Common myeloid progenitor, CD34-positive (primary cell): ENCODE measurements at regions of chrX and their contacts with region 1.

Region 1: DNA sequence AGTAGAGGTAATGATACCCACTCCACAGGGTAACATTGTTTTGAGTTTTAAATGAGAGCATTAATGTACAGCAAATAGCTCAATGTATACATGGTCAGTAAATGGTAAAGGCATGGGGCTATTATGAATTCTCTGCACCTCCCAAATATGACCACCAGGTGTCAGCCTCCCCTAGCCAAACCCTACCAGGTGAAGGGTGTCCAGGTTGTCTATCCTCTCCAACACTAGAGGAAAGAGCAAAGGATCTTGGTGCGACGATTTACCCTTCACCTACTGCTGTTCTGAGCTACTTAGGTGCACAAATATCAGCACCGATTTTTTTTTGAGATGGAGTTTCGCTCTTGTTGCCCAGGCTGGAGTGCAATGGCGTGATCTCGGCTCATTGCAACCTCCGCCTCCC is 26.5 kb upstream of the XIAP start:
- DNase-seq: peak; percentile 43 to 69 (median 60)
- H3K4me3 ChIP-seq: no peak overlapping the region
- H3K27ac ChIP-seq: no peak overlapping the region
- H3K4me1 ChIP-seq: no peaks in the 10 kb centered on the region
- H3K27me3 ChIP-seq: no peaks in the 10 kb centered on the region

Region 2: GRCh38 chrX:123846598-123847455 is 13.4 kb after region 1 on chrX:
- CTCF ChIA-PET with region 1: no interaction called
- POLR2A ChIA-PET with region 1: no interaction called
- DNase-seq: no peak
- H3K4me3 ChIP-seq: no peak overlapping the region
- H3K27ac ChIP-seq: no peak overlapping the region
- H3K4me1 ChIP-seq: peaks cover 0 to 3% (median 0%) of the 10 kb centered on the region in 4 experiments
- H3K27me3 ChIP-seq: no peaks in the 10 kb centered on the region

Region 3: GRCh38 chrX:123884809-123885408 is 51.5 kb after region 1 on chrX:
- CTCF ChIA-PET with region 1: interaction called, 12 read pairs
- POLR2A ChIA-PET with region 1: no interaction called
- DNase-seq: peak; percentile 56 to 77 (median 70)
- H3K4me3 ChIP-seq: no peak overlapping the region
- H3K27ac ChIP-seq: no peak overlapping the region
- H3K4me1 ChIP-seq: no peaks in the 10 kb centered on the region
- H3K27me3 ChIP-seq: no peaks in the 10 kb centered on the region

Region 4: DNA sequence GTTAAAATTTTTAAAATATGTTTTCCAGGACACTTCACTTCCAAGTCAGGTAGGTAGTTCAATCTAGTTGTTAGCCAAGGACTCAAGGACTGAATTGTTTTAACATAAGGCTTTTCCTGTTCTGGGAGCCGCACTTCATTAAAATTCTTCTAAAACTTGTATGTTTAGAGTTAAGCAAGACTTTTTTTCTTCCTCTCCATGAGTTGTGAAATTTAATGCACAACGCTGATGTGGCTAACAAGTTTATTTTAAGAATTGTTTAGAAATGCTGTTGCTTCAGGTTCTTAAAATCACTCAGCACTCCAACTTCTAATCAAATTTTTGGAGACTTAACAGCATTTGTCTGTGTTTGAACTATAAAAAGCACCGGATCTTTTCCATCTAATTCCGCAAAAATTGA is 76.1 kb after region 1 on chrX:
- CTCF ChIA-PET with region 1: no interaction called
- POLR2A ChIA-PET with region 1: no interaction called
- DNase-seq: no peak
- H3K4me3 ChIP-seq: no peak overlapping the region
- H3K27ac ChIP-seq: no peak overlapping the region
- H3K4me1 ChIP-seq: no peaks in the 10 kb centered on the region
- H3K27me3 ChIP-seq: no peaks in the 10 kb centered on the region